ENCODE measurements at regions of chr5 and their contacts with region 1.

Region 1: GRCh38 chr5:109703829-109704228 is 14.1 kb downstream of the MAN2A1 start:
- DNase-seq: no peak

Region 2: GRCh38 chr5:109619606-109620005 is 84.2 kb before region 1 on chr5:
- intact Hi-C with region 1: no loop called
- DNase-seq: no peak

Region 3: DNA sequence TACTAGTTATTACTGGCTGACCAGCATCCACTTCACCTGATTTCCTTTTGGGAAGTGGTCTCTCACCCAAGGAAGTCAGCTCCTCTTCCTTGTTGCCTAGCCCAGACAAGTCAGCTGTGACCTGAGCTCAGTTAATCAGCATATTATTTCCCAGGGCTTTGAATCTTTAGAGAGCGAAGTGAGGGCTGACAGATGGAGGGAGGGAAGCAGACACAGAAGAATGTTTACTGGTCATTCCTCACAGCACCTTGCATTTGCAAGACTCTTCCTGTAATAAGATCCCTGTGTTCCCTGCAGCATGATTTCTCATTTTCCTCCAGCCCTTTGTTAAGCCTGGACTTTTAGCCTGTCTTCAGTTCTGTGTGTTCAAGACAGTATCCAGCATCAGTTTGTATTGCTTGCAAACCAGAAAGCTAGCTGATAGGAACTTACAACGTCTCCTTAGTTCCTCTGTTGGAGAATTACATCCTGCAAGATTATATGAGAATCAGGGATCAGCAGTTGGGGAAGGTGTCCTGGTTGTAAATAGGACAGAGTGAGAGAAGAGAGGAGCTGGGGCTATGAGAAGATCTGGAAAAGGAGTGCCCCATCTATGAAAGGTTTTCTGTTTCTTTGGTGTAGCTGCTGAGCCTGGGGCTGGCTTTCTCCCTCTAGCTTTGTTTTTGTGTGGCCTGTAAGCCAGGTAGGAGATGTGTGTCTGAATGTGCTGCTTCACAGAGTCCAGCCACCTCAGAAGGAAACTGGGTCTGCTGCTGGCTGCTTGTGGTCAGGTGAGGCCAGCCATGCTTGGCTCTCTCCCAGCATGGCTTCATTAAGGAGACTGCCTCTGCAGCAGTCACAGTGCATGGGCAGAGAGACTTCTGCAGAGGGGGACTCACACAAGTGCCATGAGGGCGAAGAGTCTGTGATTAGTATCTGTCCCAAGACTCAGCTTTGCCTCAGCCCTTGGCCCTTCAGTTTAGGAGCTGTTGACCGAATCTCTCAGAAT is 36.2 kb after region 1 on chr5:
- intact Hi-C with region 1: loop called (anchors 5 kb)
- DNase-seq: peak in 3 of 10 donors; percentile 17 to 85 (median 72)

Measured in posterior cingulate gyrus (tissue), 11 donors.